AG04450 (cell line): ENCODE measurements at regions of chr17 and their contacts with region 1.

Region 1: DNA sequence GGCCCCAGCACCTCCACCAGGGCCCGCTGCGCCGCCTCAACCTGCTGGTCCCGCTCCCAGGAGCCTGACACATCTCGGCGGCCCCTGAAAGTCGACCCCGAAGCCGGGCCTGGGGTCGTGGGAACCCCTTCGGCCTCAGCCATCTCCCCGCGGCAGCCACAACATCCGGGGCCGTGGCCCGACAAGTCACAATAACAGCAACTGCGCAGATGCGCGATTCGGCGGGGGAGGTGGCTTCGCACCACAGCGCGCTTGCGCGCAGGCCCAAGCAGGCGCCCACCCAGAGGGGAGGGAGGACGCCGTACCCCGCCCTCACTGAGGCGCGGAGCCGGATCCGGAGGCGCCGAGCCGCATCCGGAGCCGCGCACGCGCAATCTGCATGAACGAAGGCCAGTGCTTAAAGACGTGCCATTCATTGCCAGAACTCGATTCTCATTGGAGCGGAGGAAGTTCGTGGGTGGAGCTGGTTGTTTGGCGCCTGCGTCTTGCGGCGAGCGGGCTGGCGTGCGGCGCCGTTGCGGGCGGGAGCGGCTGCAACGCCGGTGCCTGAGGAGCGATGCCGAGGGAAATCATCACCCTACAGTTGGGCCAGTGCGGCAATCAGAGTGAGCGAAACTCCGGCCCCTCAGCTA is at the starts of genes RETREG3 and TUBG1:
- DNase-seq: peak; percentile 99
- H3K4me3 ChIP-seq: peak within 1 kb of the TSS; percentile 98
- H3K27ac ChIP-seq: peak within 1 kb of the TSS; percentile 82
- H3K27me3 ChIP-seq: no peaks in the 10 kb centered on the region
- CTCF ChIP-seq: no peak; the same call in 1 of the 2 replicates
- polyA plus RNA-seq, gene RETREG3: 27.5 and 32.7 TPM in 2 replicates
- polyA plus RNA-seq, gene TUBG1: 28.4 and 36.3 TPM in 2 replicates

Region 2: DNA sequence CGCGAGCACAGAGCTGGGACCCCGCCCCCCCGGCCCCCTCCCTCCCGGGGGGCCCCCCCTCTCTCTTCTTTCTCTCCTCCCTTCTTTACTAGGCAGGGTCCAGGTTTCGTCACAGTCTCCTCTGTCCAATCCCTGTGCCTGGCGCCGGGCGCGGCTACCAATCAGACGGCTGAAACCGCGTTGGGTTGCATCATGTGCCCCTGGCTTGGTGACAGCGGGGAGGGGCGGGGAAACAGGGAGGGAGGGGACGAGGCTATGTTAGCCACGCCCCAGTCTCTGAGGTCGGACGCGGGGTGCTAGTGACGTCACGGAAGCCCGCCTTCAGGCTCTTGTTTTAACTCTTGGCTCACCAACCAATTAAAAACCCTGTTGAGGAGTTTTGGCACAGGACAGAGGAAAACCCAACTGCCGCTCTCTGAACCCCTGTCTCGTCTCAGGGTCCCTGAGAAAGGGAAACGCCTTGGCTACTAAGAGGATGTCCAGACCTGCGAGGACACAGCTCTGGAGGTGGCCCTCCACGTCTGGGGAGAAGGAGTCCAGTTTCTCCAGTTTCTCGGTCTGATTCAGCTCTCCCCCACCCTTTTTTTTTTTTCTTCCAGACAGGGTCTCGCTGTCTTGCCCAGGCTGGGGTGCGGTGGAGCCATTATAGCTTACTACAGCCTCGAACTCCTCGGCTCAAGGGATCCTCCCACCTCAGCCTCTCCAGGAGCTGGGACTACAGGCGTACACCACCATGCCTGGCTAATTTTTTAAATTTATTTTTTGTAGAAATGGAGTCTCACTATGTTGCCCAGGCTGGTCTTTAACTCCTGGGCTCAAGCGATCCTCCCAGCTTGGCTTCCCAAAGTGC is 67.9 kb after region 1 on chr17:
- CTCF ChIA-PET with region 1: interaction called, 10 read pairs
- POLR2A ChIA-PET with region 1: interaction called, 12 read pairs
- DNase-seq: peak; percentile 99
- H3K4me3 ChIP-seq: peak overlapping the region; percentile 89
- H3K27ac ChIP-seq: peak overlapping the region; percentile 84
- H3K27me3 ChIP-seq: no peaks in the 10 kb centered on the region
- CTCF ChIP-seq: no peak

Region 3: DNA sequence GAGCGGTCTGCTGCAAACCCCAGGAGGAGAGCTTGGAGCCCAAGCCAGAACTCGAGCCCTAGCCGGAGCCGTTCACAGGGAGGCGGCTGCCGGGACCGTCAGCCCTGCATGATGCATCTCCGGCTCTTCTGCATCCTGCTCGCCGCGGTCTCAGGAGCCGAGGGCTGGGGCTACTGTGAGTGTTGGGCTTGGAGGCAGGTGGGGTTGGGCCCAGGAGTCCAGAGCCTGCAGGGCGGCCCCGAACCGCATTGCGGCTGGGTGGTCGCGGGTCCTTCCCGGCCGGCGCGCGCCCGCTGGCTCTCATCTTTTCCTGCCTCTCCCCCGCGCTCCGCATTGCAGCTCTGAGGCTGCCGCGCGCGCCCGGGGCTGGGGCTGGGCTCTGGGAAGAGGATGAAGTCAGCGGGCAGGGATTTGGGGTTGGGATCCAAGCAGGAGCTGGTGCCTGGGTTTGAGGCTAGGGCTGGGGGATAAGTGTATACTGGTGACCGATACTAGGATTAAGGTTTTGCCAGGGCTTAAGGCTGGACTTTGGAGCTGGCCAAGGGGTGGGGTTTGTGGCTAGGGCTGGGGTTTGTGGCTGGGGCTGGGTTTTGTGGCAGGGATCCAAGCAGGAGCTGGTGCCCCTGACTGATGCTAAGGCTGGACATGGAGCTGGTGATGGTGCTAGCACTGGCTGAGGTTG is 73.6 kb after region 1 on chr17:
- CTCF ChIA-PET with region 1: interaction called, 3 read pairs
- POLR2A ChIA-PET with region 1: interaction called, 12 read pairs
- DNase-seq: no peak
- H3K4me3 ChIP-seq: peak overlapping the region; percentile 78
- H3K27ac ChIP-seq: peak overlapping the region; percentile 81
- H3K27me3 ChIP-seq: no peaks in the 10 kb centered on the region
- CTCF ChIP-seq: no peak